Dendritic cell treated with granulocyte-macrophage colony-stimulating factor and Interleukin-4, amounts not matched to agents 40 ng/mL and 50 ng/mL, for 4 days (primary cell): ENCODE measurements at regions of chr3 and their contacts with region 1.

Region 1: GRCh38 chr3:177359593-177360357 is 162.5 kb upstream of the TBL1XR1 start:
- H3K4me3 Mint-ChIP-seq: peak overlapping the region; percentile 76
- H3K27ac Mint-ChIP-seq: peak overlapping the region; percentile 98
- H3K4me1 Mint-ChIP-seq: peaks cover 64% of the 10 kb centered on the region
- H3K27me3 Mint-ChIP-seq: no peaks in the 10 kb centered on the region

Region 2: DNA sequence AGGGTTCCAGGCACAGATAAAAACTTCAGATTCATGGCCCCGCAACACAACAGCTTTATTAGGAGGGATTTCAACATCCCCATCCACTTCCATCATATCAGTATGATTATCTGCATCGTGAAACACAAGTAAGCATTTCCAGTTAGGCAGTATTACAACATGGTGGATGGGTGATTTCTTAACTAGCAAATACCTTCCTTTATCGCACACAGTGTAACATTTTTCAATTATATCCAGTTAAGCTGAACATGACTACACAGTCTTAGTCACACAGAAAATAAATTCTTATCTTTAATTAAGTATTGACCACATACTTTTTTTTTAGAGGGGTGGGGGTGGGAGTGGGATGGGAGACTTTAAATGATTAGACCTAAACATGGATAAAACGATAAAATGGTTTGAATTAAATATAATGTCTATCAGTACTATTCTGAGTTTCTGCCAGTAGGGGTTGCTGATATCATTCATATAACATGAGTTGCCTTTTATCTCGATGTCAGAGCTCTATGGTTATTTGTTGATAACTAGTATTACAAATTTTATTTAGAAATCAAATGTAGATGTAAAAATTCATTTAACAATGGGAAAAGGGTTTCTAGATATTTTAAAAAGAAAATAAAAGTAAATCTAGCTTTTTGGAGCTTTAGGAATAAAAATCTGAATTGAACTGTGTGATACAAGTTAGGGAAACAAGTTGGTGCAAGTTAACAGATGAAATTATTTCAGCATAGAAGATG is 309.1 kb before region 1 on chr3:
- intact Hi-C with region 1: loop called (anchors 2 kb)
- H3K4me3 Mint-ChIP-seq: no peak overlapping the region
- H3K27ac Mint-ChIP-seq: no peak overlapping the region
- H3K4me1 Mint-ChIP-seq: peaks cover 6% of the 10 kb centered on the region
- H3K27me3 Mint-ChIP-seq: no peaks in the 10 kb centered on the region

Region 3: DNA sequence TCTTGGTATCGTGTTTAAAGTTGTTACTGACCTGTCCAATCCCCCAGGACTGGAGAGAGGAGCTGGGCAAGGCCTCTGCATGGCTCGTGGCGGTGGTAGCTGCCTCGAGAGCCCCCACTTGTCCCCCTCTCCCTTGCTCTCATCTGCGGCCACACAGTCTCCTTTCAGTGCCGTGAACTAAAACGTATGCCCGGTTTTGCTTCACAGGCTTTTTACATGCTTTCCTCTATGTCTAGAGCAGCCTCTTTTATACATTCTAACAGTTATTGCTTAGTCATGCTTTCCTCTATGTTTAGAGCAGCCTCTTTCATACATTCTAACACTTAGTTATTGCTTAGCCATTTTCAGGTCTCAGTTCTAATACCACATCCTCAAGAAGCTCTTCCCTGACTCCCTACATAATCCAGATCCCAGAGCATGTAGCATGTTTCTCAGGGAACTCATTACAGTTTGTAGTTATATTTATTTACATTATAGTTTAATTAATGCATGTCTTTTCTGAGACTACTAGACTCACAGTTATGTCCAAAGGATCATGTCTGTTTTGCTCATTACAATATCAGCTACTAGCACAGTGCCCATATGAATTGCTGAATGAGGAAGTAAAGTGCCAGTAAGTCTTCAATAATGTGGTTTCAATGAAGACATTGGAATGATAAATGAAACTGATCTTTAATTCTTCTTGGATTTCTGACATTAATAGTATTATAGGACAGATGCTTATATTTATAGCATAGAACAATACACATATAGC is 96.0 kb before region 1 on chr3:
- intact Hi-C with region 1: loop called (anchors 5 kb)
- H3K4me3 Mint-ChIP-seq: no peak overlapping the region
- H3K27ac Mint-ChIP-seq: peak overlapping the region; percentile 78
- H3K4me1 Mint-ChIP-seq: peaks cover 19% of the 10 kb centered on the region
- H3K27me3 Mint-ChIP-seq: no peaks in the 10 kb centered on the region

Region 4: GRCh38 chr3:177320765-177321247 is 39.0 kb before region 1 on chr3:
- intact Hi-C with region 1: loop called (anchors 5 kb)
- H3K4me3 Mint-ChIP-seq: no peak overlapping the region
- H3K27ac Mint-ChIP-seq: peak overlapping the region; percentile 55
- H3K4me1 Mint-ChIP-seq: peaks cover 43% of the 10 kb centered on the region
- H3K27me3 Mint-ChIP-seq: no peaks in the 10 kb centered on the region

Region 5: GRCh38 chr3:177337541-177338331 is 22.0 kb before region 1 on chr3:
- intact Hi-C with region 1: no loop called
- H3K4me3 Mint-ChIP-seq: no peak overlapping the region
- H3K27ac Mint-ChIP-seq: peak overlapping the region; percentile 37
- H3K4me1 Mint-ChIP-seq: peaks cover 72% of the 10 kb centered on the region
- H3K27me3 Mint-ChIP-seq: no peaks in the 10 kb centered on the region

Region 6: GRCh38 chr3:177419904-177420601 is 60.3 kb after region 1 on chr3:
- intact Hi-C with region 1: no loop called
- H3K4me3 Mint-ChIP-seq: no peak overlapping the region
- H3K27ac Mint-ChIP-seq: no peak overlapping the region
- H3K4me1 Mint-ChIP-seq: peaks cover 11% of the 10 kb centered on the region
- H3K27me3 Mint-ChIP-seq: no peaks in the 10 kb centered on the region

Region 7: GRCh38 chr3:177448987-177449975 is 89.5 kb after region 1 on chr3:
- intact Hi-C with region 1: loop called (anchors 5 kb)
- H3K4me3 Mint-ChIP-seq: no peak overlapping the region
- H3K27ac Mint-ChIP-seq: peak overlapping the region; percentile 26
- H3K4me1 Mint-ChIP-seq: peaks cover 30% of the 10 kb centered on the region
- H3K27me3 Mint-ChIP-seq: no peaks in the 10 kb centered on the region

Region 8: DNA sequence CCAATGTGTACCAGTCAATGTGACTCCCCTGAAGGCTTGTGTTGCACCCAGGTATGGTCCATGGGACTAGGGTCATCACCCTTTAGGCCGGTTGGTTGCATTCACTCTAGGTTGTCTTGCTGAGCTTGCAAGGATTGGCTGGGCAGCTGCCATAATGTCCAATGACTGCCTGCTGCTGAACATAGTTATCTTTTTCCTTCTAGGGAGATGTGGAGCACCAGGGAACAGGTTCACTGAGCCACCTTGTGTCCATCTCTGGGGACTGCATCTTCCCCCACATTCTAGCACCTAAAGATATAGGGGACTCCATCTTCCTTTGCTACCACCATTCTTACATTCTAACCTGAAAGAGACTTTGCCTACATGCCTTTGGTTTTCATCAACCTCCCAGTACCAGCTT is 417.9 kb after region 1 on chr3:
- intact Hi-C with region 1: loop called (anchors 5 kb)
- H3K4me3 Mint-ChIP-seq: no peak overlapping the region
- H3K27ac Mint-ChIP-seq: no peak overlapping the region
- H3K4me1 Mint-ChIP-seq: peaks cover 55% of the 10 kb centered on the region
- H3K27me3 Mint-ChIP-seq: no peaks in the 10 kb centered on the region